Esophagus muscularis mucosa (tissue), 4 donors: ENCODE measurements at regions of chr14 and their contacts with region 1.

Region 1: DNA sequence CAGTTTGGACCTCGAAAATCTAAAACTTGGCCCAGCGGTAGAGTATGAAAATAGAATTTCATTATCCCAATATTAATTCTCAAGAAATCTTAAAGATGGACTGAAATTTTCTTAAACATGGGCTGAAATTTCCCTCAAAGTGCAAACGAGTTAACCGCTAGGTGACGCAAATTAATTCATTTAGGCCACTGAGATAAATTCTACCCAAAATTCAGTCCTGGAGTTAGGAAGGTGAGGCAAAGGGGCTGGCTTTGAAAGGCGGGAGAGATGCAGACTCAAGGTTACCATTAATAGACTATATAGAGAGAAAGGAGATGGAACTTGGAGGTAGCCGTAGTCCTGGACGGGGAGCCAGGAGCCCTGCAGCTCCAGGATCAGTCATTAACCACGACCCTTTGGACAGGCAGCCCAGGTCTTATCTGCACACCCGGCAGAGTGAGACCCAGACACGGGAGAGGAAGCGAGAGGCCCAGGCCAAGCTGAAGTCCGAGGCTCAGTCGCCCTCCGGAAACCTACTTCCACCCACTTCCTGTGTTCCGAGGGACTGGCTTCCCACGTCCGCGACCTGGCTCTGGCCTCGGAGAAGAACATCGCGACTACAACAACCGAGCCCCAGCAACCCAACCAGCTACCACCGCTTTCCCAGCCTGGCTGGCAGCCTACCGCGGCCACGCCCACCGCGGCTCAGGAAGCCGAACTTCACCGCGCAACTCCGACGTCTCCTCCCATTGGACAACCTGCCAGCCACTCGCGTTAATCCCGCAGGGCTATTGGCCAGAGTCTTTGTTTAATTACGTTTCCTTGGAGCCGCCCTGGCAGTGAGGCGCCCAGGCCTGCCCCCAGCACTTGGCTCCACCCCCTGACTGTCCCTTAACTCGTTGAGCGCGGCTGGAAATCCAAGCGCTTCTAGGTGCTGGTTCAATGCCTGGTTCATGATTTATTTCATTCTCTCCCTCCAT is at the start of gene EFCAB11:
- DNase-seq: peak; percentile 99
- H3K4me3 ChIP-seq: peak within 1 kb of the TSS; percentile 72 to 92 (median 83)
- H3K27ac ChIP-seq: peak within 1 kb of the TSS; percentile 91 to 95 (median 94)
- H3K4me1 ChIP-seq: peaks cover 7 to 34% (median 25%) of the 10 kb centered on the region in 4 donors
- H3K27me3 ChIP-seq: no peaks in the 10 kb centered on the region
- CTCF ChIP-seq: no peak
- EP300 ChIP-seq: no peak
- POLR2A ChIP-seq: no peak
- total RNA-seq, gene EFCAB11: 3.1 to 15.0 (median 6.1) TPM

Region 2: GRCh38 chr14:90019824-90020523 is 65.6 kb after region 1 on chr14:
- intact Hi-C with region 1: no loop called
- DNase-seq: peak; percentile 68
- H3K4me3 ChIP-seq: no peak overlapping the region
- H3K27ac ChIP-seq: no peak overlapping the region
- H3K4me1 ChIP-seq: no peaks in the 10 kb centered on the region
- H3K27me3 ChIP-seq: no peaks in the 10 kb centered on the region
- CTCF ChIP-seq: no peak
- EP300 ChIP-seq: no peak
- POLR2A ChIP-seq: no peak

Region 3: GRCh38 chr14:90256354-90257131 is 302.2 kb after region 1 on chr14 and contains the start of gene PSMC1:
- intact Hi-C with region 1: loop called (anchors 10 kb)
- DNase-seq: peak; percentile 96
- H3K4me3 ChIP-seq: peak within 1 kb of the TSS; percentile 74 to 93 (median 82)
- H3K27ac ChIP-seq: peak within 1 kb of the TSS; percentile 76 to 84 (median 78)
- H3K4me1 ChIP-seq: peaks cover 18 to 28% (median 21%) of the 10 kb centered on the region in 4 donors
- H3K27me3 ChIP-seq: peaks cover 0 to 15% (median 0%) of the 10 kb centered on the region in 4 donors
- CTCF ChIP-seq: peak in 1 of 3 experiments; percentile 20
- EP300 ChIP-seq: no peak
- POLR2A ChIP-seq: no peak
- total RNA-seq, gene PSMC1: 96.8 to 139 (median 117) TPM